ENCODE measurements at regions of chr11 and their contacts with region 1.

Region 1: GRCh38 chr11:27472398-27473016 is at the start of gene LGR4:
- DNase-seq: peak; percentile 77
- H3K4me3 Mint-ChIP-seq: peak within 1 kb of the TSS; percentile 93
- H3K27ac Mint-ChIP-seq: no peak within 1 kb of the TSS
- H3K4me1 Mint-ChIP-seq: peaks cover 12% of the 10 kb centered on the region
- H3K27me3 Mint-ChIP-seq: peaks cover 7% of the 10 kb centered on the region
- total RNA-seq, gene LGR4: 0.12 to 0.19 TPM

Region 2: GRCh38 chr11:27183672-27184457 is 288.6 kb before region 1 on chr11:
- CTCF ChIA-PET with region 1: interaction called, 3 read pairs
- intact Hi-C with region 1: loop called (anchors 5 kb)
- DNase-seq: peak; percentile 68
- H3K4me3 Mint-ChIP-seq: no peak overlapping the region
- H3K27ac Mint-ChIP-seq: no peak overlapping the region
- H3K4me1 Mint-ChIP-seq: no peaks in the 10 kb centered on the region
- H3K27me3 Mint-ChIP-seq: peaks cover 16% of the 10 kb centered on the region

Region 3: GRCh38 chr11:27201454-27202236 is 270.9 kb before region 1 on chr11:
- CTCF ChIA-PET with region 1: interaction called, 3 read pairs
- intact Hi-C with region 1: loop called (anchors 5 kb)
- DNase-seq: no peak
- H3K4me3 Mint-ChIP-seq: no peak overlapping the region
- H3K27ac Mint-ChIP-seq: no peak overlapping the region
- H3K4me1 Mint-ChIP-seq: no peaks in the 10 kb centered on the region
- H3K27me3 Mint-ChIP-seq: peaks cover 2% of the 10 kb centered on the region

Region 4: DNA sequence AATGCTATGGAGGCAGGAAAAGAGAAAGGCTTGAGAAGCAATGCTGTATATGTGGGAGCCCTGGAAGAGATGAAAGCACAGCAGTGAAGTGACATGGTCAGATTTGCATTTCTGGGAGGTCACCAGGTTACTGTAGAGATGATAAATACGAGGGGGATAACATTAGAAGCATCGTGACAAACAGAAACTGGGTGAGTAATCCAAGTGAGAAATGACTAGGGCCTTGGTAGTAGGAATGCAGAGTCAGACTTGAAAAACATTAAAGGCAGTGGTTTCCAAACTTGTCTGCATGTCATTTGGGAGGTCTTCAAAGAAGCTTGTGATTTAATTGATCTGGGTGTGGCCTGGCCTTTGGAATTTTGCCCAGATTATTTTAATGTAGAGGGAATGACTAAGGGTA is 153.4 kb before region 1 on chr11:
- CTCF ChIA-PET with region 1: no interaction called
- intact Hi-C with region 1: loop called (anchors 5 kb)
- DNase-seq: peak; percentile 23
- H3K4me3 Mint-ChIP-seq: no peak overlapping the region
- H3K27ac Mint-ChIP-seq: no peak overlapping the region
- H3K4me1 Mint-ChIP-seq: peaks cover 9% of the 10 kb centered on the region
- H3K27me3 Mint-ChIP-seq: peaks cover 7% of the 10 kb centered on the region

Region 5: GRCh38 chr11:27362749-27363575 is 109.5 kb before region 1 on chr11 and contains the start of gene CCDC34:
- CTCF ChIA-PET with region 1: no interaction called
- intact Hi-C with region 1: loop called (anchors 1 kb)
- DNase-seq: peak; percentile 87
- H3K4me3 Mint-ChIP-seq: peak within 1 kb of the TSS; percentile 95
- H3K27ac Mint-ChIP-seq: peak within 1 kb of the TSS; percentile 77
- H3K4me1 Mint-ChIP-seq: peaks cover 22% of the 10 kb centered on the region
- H3K27me3 Mint-ChIP-seq: no peaks in the 10 kb centered on the region
- total RNA-seq, gene CCDC34: 28.2 to 29.9 TPM

Region 6: GRCh38 chr11:27506200-27507182 is 34.0 kb after region 1 on chr11 and contains the start of gene LIN7C:
- CTCF ChIA-PET with region 1: no interaction called
- intact Hi-C with region 1: loop called (anchors 1 kb)
- DNase-seq: peak; percentile 98
- H3K4me3 Mint-ChIP-seq: peak within 1 kb of the TSS; percentile 96
- H3K27ac Mint-ChIP-seq: peak within 1 kb of the TSS; percentile 95
- H3K4me1 Mint-ChIP-seq: peaks cover 46% of the 10 kb centered on the region
- H3K27me3 Mint-ChIP-seq: no peaks in the 10 kb centered on the region
- total RNA-seq, gene LIN7C: 30.5 to 31.1 TPM

Measured in activated naive CD4-positive, alpha-beta T cell treated with anti-CD3 and anti-CD28 coated beads for 36 hours (primary cell).